Left ventricle myocardium superior (tissue), 1 donor: ENCODE measurements at regions of chr4 and their contacts with region 1.

Region 1: GRCh38 chr4:141307241-141307689 is 86.6 kb downstream of the ZNF330 start:
- DNase-seq: peak; percentile 43
- ATAC-seq: peak; percentile 95

Region 2: GRCh38 chr4:141711014-141711610 is 403.8 kb after region 1 on chr4:
- intact Hi-C with region 1: loop called (anchors 5 kb)
- DNase-seq: no peak
- ATAC-seq: no peak